ENCODE measurements at regions of chr16 and their contacts with region 1.

Region 1: GRCh38 chr16:77675464-77676324 is 46.6 kb upstream of the NUDT7 start:
- DNase-seq: peak; percentile 71 to 74
- H3K4me3 ChIP-seq: no peak overlapping the region
- H3K27ac ChIP-seq: no peak overlapping the region
- H3K4me1 ChIP-seq: peaks cover 0 to 7% (median 2%) of the 10 kb centered on the region in 4 donors
- H3K27me3 ChIP-seq: no peaks in the 10 kb centered on the region
- CTCF ChIP-seq: peak; percentile 83 to 96

Region 2: DNA sequence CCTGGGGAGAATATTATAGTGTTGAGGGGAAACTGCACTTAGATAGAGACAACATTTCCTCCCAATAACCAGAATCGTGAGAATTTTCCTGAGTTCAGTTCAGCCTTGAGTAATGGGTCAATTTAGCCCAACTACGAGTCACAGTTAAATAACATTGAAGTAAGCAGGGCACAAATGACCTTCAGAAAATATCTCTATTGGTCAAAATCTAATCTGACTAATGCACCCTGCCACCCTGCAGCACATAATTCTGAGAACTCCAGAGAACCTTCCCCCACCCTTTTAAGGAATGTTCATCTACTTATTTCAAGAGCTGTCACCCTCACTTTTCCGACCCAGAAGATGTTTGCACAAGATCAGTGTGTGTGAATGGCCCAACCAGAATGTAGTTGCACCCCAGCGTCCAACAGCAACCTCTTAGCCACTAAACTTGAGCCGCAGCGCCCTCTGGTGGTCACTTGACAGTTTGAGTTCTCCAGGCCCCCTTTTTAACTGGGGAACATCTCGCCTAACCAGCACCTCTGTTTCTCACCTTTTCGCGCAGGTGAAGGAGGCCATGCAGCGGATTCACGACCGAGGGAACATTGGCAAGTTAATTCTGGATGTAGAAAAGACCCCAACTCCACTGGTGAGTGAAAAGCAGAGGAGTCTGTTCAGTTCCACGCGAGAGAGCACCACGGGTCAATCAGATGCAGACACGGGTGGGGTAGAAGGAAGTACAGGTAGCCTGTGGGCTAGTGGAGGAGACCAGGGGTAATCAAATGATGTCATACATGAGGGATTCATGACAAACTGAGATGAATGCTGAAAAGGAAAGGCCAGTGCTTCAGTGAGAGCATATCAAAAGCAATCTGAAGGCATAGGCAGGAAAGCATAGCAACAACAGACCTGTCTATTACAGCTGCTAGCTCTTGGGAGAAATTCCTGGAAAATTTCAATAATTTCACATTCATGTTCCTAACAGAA is 295.9 kb after region 1 on chr16:
- intact Hi-C with region 1: loop called (anchors 2 kb)
- DNase-seq: peak; percentile 79 to 86
- H3K4me3 ChIP-seq: no peak overlapping the region
- H3K27ac ChIP-seq: no peak overlapping the region
- H3K4me1 ChIP-seq: peaks cover 0 to 6% (median 0%) of the 10 kb centered on the region in 4 donors
- H3K27me3 ChIP-seq: no peaks in the 10 kb centered on the region
- CTCF ChIP-seq: peak; percentile 72 to 87

Region 3: GRCh38 chr16:78002915-78003538 is 327.3 kb after region 1 on chr16:
- intact Hi-C with region 1: loop called (anchors 2 kb)
- DNase-seq: peak; percentile 70 to 92
- H3K4me3 ChIP-seq: no peak overlapping the region
- H3K27ac ChIP-seq: no peak overlapping the region
- H3K4me1 ChIP-seq: peaks cover 0 to 6% (median 0%) of the 10 kb centered on the region in 4 donors
- H3K27me3 ChIP-seq: no peaks in the 10 kb centered on the region
- CTCF ChIP-seq: peak; percentile 80 to 84